ENCODE measurements at regions of chr19 and their contacts with region 1.

Region 1: DNA sequence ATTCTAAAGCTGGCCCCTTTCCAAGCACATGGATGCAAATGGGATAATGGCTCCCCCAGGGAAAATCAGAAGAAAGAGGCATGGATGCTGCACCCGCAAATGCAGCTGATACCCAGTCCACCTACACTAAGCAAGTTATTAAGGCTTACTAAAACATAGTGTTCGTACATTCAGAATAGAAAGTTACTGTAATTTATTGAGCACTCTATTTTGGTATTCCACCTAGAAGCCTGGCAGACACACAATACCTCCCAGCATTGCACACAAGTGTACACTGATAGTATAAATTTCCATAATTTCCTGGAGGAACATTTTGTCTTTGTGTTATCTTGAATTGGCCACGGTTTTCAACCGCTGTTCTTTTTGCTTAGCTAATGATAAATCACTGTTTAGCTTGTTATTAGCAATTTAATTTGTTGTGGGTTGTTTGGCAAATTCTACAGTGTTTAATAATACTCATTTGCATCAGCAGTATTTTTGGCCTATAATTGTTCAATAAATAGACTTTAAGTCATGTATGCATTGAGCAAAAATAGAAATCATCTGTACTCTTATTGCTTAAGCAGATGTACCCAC is 94.5 kb upstream of the MRI1 start:
- DNase-seq: no peak
- H3K4me3 ChIP-seq: no peak overlapping the region
- H3K27ac ChIP-seq: no peak overlapping the region
- H3K4me1 ChIP-seq: no peaks in the 10 kb centered on the region
- H3K27me3 ChIP-seq: no peaks in the 10 kb centered on the region
- CTCF ChIP-seq: no peak

Region 2: DNA sequence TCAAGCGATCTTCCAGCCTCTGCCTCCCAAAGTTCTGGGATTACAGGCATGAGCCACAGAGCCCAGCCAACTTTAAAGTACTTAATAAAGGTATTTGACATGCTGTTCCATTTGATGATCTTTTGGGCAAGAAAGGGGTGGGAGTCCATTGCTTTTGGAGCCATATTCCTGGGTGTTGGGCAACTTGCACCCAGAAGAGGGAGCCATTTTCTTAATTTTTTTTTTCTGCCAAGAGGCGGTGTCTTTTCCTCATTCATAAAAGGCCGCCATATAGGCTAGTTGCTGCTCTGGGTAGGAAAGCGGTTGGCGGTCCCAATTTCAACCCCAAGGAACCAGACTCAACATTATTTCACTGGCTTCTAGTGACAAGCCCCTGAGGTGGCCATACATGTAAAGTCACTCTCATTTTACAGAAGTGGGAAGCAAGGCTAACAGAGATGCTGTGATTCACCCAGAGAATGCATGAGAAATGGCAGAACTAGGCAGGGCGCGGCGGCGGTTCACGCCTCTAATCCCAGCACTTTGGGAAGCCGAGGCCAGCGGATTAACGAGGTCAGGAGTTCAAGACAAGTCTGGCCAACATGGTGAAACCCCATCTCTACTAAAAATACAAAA is 303.2 kb before region 1 on chr19:
- CTCF ChIA-PET with region 1: no interaction called
- POLR2A ChIA-PET with region 1: no interaction called
- intact Hi-C with region 1: no loop called
- DNase-seq: peak; percentile 71
- H3K4me3 ChIP-seq: no peak overlapping the region
- H3K27ac ChIP-seq: no peak overlapping the region
- H3K4me1 ChIP-seq: no peaks in the 10 kb centered on the region
- H3K27me3 ChIP-seq: no peaks in the 10 kb centered on the region
- CTCF ChIP-seq: peak; percentile 72

Region 3: GRCh38 chr19:13880059-13881043 is 210.5 kb after region 1 on chr19:
- CTCF ChIA-PET with region 1: no interaction called
- POLR2A ChIA-PET with region 1: no interaction called
- intact Hi-C with region 1: no loop called
- DNase-seq: peak; percentile 97
- H3K4me3 ChIP-seq: peak overlapping the region; percentile 35
- H3K27ac ChIP-seq: peak overlapping the region; percentile 82
- H3K4me1 ChIP-seq: peaks cover 13% of the 10 kb centered on the region
- H3K27me3 ChIP-seq: no peaks in the 10 kb centered on the region
- CTCF ChIP-seq: peak; percentile 100

Region 4: GRCh38 chr19:14510308-14511228 is 840.7 kb after region 1 on chr19:
- CTCF ChIA-PET with region 1: no interaction called
- POLR2A ChIA-PET with region 1: interaction called, 17 read pairs
- intact Hi-C with region 1: no loop called
- DNase-seq: no peak
- H3K4me3 ChIP-seq: no peak overlapping the region
- H3K27ac ChIP-seq: no peak overlapping the region
- H3K4me1 ChIP-seq: no peaks in the 10 kb centered on the region
- H3K27me3 ChIP-seq: no peaks in the 10 kb centered on the region
- CTCF ChIP-seq: no peak